Calu3 (cell line): ENCODE measurements at regions of chrX and their contacts with region 1.

Region 1: GRCh38 chrX:141669689-141670088 is 28.9 kb downstream of the SPANXD start:
- DNase-seq: no peak
- H3K4me3 Mint-ChIP-seq: no peak overlapping the region
- H3K27ac Mint-ChIP-seq: no peak overlapping the region
- H3K4me1 Mint-ChIP-seq: no peaks in the 10 kb centered on the region
- H3K27me3 Mint-ChIP-seq: no peaks in the 10 kb centered on the region
- CTCF ChIP-seq: no peak

Region 2: GRCh38 chrX:141402897-141403610 is 266.6 kb before region 1 on chrX:
- CTCF ChIA-PET with region 1: no interaction called
- intact Hi-C with region 1: no loop called
- DNase-seq: no peak
- H3K4me3 Mint-ChIP-seq: no peak overlapping the region
- H3K27ac Mint-ChIP-seq: no peak overlapping the region
- H3K4me1 Mint-ChIP-seq: no peaks in the 10 kb centered on the region
- H3K27me3 Mint-ChIP-seq: no peaks in the 10 kb centered on the region
- CTCF ChIP-seq: no peak

Region 3: DNA sequence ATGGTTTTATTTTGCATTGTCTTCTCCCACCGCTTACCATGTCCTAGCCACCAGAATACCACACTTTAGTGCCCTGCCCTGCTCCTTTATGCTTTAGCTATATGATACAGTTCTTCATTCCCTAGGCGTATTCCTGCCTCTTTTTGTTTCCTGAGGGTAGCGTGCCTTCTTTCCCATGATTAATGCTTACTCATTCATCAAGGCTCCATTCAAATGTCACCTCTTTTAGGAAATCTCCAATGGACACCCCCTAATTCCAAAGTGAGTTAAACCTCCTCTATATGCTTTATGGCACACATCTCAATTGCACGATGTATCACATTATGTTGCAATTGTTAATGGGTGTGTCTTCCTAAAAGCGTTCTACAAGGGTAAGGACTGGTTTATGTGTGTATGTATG is 17.4 kb before region 1 on chrX:
- CTCF ChIA-PET with region 1: interaction called, 10 read pairs
- intact Hi-C with region 1: no loop called
- DNase-seq: no peak
- H3K4me3 Mint-ChIP-seq: no peak overlapping the region
- H3K27ac Mint-ChIP-seq: no peak overlapping the region
- H3K4me1 Mint-ChIP-seq: no peaks in the 10 kb centered on the region
- H3K27me3 Mint-ChIP-seq: no peaks in the 10 kb centered on the region
- CTCF ChIP-seq: no peak